Right ventricle myocardium inferior (tissue), 1 donor: ENCODE measurements at regions of chr19 and their contacts with region 1.

Region 1: GRCh38 chr19:9945319-9945966 is 9.1 kb upstream of the OLFM2 start:
- DNase-seq: peak; percentile 92
- ATAC-seq: peak; percentile 97

Region 2: DNA sequence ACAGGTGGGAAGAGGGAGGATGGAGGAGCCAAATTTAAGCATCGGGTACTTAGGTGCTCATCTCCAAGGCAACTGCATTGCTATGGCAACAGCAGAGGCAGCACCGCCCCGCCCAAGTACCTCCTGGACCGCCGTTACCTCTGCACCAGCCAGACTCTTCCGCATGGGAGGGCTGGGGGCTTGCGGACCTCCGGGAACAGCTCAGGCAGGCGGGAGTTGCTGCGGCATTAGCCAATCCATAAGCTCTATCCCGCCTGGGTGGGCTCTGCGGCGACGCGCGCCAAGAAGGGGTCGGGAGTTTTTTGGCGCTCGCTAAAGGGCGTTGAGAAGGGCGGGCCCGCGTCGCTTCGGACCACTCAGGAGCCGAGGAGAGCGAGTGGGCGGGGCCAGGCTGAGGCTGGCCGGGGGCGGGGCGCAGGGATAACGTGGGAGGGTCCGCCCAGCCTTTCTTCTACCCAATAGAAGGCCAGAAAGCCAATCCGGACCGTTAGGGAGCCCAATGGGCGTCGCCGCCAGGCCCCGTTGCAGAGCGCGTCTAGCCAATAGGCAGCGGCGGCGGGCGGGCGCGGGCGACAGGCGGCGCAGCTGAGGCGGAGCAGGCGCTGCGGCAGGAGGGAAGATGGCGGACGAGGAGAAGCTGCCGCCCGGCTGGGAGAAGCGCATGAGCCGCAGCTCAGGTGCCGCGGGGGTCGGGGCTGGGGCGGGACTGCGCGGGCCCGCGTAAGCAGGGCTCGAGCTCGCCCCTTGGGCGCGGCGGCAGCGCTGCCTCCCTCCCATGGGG is 110.5 kb before region 1 on chr19 and contains the start of gene PIN1:
- intact Hi-C with region 1: no loop called
- DNase-seq: peak; percentile 99
- ATAC-seq: peak; percentile 100
- total RNA-seq, gene PIN1: 89.2 TPM

Region 3: DNA sequence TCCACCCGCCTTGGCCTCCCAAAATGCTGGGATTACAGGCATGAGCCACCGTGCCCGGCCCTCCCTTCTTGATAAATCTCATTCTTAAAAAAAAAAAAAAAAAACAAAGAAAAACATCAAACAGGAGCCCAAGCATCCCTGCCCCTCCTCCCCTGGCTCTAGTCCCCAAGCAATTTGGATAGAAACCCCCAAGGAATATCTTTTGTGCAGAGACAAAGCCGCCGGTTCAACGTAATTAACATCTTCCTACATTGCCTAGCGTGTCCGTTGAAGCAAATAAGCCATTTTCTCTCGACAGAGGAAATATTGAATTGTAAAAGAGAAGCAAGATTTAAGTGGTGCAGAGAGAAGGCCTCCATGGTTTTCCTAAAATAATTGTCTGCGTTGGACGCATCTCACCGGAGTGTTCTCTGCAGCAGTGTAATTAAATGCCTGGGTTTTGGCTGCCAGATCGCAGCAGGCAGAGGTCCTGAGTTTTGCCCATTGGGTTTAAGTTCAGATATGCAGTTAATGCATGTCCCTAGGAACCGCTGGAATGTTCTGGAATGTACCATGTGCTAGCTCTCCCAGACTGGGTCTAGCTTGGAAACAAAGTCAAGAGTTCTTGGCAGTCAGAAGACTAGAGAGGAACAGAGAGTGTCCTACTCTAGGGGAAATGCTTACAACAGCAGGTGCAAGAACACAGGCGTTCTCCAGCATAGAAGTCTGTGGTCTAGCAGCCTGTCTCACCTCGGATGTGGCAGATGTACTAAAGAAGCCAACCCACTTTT is 79.5 kb before region 1 on chr19:
- intact Hi-C with region 1: no loop called
- DNase-seq: no peak
- ATAC-seq: no peak

Region 4: DNA sequence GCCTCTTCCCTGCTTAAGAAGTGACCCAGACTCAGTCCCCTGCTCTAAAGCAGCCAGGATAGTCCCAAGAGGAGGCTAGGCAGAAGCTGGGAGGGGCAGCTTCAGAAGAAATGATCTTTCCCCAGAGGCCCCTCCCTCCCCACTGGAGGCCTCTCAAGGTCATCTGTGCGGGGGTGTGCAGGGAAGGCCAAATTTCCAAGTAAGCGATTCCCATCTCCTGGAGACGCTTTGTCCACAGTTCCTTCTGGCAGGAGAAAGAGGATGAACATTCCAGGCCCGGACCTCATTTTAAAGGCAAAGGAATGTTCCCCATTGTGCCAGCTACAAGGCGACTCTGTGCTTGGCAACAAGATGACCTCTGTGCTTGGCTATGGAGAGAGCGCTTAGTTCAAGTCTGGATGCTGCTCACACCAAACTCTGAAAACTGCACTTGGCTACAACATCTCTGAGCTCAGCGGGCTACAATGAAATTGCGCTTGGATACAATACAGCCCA is 41.4 kb after region 1 on chr19:
- intact Hi-C with region 1: no loop called
- DNase-seq: no peak
- ATAC-seq: peak; percentile 91

Region 5: GRCh38 chr19:10006335-10006708 is 60.9 kb after region 1 on chr19:
- intact Hi-C with region 1: loop called (anchors 5 kb)
- DNase-seq: no peak
- ATAC-seq: peak; percentile 67